ENCODE measurements at regions of chr9 and their contacts with region 1.

Region 1: GRCh38 chr9:84285381-84285780 is 55.2 kb downstream of the SLC28A3 start:
- DNase-seq: no peak
- H3K4me3 ChIP-seq: no peak overlapping the region
- H3K27ac ChIP-seq: no peak overlapping the region
- H3K4me1 ChIP-seq: no peaks in the 10 kb centered on the region
- CTCF ChIP-seq: no peak

Region 2: DNA sequence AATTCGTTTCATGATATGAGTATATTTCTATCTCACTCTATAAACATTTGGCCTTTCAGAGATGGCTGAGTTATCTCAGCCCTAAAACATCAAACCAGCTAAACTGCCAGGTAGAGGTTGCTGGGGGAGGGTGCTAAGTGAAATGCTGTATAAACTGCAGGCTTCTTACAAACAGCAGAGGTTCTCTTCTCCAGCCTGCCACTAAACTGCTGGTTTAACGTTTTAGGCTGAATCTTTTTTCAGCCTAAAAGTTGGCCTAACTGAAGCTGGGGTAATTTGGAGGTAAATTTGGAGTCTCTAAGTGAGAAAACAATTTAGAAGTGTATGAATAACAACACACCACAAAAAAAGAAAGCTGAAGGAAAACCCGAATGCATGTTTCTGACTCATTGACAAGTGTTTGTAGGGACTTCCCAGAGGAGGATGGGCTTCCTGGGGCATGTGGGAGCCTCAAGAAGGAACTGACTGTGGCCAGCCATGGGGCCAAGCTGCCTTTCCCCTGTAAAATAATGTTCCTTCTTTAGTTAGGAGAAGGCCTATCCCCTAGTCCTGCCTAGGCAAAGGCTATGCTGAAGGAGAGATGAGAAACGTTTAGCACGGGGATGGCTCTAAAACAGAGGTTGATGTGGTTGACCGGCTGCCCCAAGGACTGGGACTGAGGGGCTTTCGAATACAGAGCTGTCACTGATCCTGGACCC is 10.9 kb after region 1 on chr9:
- CTCF ChIA-PET with region 1: no interaction called
- POLR2A ChIA-PET with region 1: interaction called, 13 read pairs
- intact Hi-C with region 1: no loop called
- DNase-seq: no peak
- H3K4me3 ChIP-seq: no peak overlapping the region
- H3K27ac ChIP-seq: no peak overlapping the region
- H3K4me1 ChIP-seq: no peaks in the 10 kb centered on the region
- CTCF ChIP-seq: no peak

Region 3: DNA sequence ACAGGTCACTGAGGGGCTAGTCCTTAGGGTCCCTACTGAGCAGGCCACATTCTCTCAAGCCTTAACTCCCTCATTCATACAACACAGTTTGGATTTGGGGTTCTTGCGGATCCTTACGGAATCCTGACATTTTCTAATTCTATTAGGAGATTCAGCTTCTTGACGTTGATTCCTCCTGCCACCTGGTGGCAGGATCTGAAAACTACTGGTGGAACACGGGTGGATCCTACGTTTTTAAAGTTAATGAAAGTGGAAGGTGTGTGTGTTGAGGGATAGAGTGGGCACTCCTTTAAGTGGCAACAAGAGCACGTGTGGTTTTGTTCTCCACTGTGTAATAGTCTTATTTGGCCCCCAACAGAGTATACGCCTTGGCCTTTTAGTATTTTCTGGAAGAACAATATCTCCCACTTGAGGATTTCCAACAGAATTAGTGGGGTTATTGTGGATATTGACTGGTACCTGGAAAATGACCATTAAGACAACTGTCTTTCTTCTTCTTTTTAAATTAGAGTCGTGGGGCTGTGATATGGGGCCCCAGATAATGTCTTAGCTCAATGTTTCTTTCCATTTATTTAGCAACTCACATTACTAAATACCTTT is 30.0 kb after region 1 on chr9:
- CTCF ChIA-PET with region 1: no interaction called
- POLR2A ChIA-PET with region 1: no interaction called
- intact Hi-C with region 1: no loop called
- DNase-seq: peak; percentile 40
- H3K4me3 ChIP-seq: no peak overlapping the region
- H3K27ac ChIP-seq: no peak overlapping the region
- H3K4me1 ChIP-seq: no peaks in the 10 kb centered on the region
- CTCF ChIP-seq: peak; percentile 81